Posterior vena cava (tissue), 2 donors: ENCODE measurements at regions of chr7 and their contacts with region 1.

Region 1: GRCh38 chr7:101882595-101883564 is 65.5 kb downstream of the CUX1 start:
- DNase-seq: peak; percentile 93

Region 2: DNA sequence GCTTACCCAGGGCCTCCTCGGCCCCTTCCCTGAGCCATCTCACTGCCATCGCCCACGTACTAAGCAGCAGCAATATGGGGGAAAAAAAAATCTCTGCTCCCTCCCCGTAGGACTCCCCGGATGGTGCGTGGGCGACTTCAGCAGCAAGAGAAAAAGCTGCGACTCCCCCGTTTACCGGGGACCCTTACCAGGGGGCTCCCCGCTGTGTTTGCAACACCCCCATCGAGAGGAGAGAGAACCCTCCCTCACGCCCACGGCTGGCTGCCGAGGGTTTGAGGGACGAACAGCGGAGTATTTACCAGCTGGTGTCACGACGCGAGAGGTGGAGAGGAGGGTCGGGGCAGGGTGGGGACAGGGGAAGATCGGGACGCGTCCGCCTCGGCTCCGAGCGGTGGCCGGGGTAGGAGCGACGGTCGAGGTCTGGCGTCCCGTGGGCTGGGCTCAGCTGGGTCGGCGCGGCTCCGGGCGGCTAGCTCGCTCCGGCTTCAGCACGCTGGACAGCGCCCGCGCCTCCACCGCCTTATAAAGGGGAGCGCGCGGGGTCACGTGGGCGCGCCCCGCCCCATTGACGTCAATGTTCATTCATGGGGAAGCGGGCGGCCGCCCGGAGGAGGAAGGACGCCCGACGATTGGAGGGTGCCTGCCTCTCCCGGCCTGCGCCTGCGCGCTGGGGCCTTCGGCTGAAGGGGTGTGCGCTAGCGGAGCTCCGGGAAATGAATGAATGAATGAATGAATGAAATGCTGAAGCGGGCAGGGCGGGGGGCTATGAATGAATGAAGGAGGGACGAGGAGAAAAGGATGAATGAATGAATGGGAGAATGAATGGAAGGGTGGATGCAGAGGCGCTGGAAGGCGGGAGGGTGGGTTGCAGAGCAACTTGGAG is 717.6 kb before region 1 on chr7 and contains the start of gene VGF:
- intact Hi-C with region 1: loop called in 1 of 2 experiments (anchors 5 kb)
- DNase-seq: peak; percentile 98
- total RNA-seq, gene VGF: not detected

Region 3: DNA sequence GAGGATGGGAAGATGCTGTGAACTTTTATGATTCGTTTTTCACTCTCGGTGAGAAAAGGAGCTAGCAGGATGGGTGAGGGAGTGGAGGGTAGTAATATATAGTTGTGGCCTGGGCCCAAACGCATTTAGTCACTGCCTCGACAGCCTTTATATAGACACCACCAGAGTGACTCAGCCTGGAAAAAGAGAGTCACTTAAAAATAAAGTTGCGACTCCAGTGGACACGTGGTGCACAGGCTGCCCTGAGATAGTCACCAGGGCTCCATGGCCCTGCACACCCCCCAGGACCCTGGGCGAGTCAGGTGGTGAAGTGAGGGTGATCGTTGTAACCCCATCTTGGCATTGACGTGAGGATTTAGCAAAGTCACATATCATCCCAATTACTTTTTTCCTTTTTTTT is 41.3 kb after region 1 on chr7:
- intact Hi-C with region 1: loop called in 1 of 2 experiments (anchors 1 kb)
- DNase-seq: peak; percentile 69